PC-9 (cell line): ENCODE measurements at regions of chr15 and their contacts with region 1.

Region 1: DNA sequence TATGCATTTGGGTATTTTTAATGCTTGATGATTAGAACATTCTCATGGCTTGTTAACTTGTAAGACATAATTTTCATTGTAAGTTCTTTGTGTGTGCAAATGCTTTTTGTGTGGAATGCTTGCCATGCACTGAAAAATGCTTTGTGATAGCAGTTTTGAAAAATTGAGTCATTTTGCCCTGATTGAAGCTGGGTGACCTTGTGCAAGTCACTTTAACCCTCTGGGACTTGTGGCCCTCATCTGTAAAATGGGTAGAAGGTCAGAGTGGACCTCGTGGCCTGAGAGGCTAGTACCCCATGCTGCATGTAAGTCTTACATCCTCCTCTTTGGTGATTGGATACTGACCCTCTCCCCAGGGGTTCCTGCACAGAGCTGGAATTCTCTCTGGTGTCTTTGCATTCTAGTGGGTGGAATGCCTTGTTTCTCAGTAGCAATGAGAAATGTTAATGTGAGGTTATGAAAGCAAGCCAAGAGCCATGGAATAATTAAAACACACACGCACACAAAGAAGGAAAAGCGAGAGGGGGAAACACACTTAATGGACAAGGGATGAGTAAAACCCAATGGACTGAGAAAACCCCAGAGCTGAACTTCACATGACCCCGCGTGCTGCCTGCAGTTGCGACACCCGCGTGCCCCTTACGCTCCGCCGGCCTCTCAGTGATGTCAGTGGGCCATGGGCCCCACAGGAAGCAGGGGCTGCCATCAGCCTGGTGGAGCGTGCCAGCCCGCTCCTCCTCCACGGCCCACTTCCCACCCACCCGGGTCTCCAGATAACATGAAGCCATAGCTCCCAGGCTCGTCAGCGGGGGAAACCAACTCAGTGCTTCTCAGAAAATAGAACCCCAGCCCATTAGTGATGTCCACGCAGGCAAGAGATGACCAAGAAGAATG is 44.0 kb downstream of the SMAD3 start:
- DNase-seq: peak in 1 of 2 experiments; percentile 36
- H3K4me3 ChIP-seq: no peak overlapping the region
- H3K27ac ChIP-seq: peak overlapping the region; percentile 100
- H3K4me1 ChIP-seq: peaks cover 67% of the 10 kb centered on the region
- H3K27me3 ChIP-seq: no peaks in the 10 kb centered on the region
- CTCF ChIP-seq: no peak

Region 2: DNA sequence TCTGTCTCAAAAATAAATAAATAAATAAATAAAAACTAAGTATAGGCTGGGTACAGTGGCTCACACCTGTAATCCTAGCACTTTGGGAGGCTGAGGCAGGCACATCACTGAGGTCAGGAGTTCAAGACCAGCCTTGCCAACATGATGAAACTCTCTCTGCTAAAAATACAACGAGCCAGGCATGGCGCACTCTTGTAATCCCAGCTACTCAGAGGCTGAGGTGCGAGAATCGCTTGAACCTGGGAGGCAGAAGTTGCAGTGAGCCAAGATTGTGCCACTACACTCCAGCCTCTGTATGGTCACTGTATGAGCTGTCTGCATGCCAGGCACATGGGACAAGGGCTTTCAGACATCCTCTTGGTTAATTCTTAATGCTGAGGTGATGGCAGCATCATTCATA is 781.7 kb before region 1 on chr15:
- CTCF ChIA-PET with region 1: no interaction called
- POLR2A ChIA-PET with region 1: no interaction called
- intact Hi-C with region 1: no loop called
- DNase-seq: no peak
- H3K4me3 ChIP-seq: no peak overlapping the region
- H3K27ac ChIP-seq: no peak overlapping the region
- H3K4me1 ChIP-seq: no peaks in the 10 kb centered on the region
- H3K27me3 ChIP-seq: no peaks in the 10 kb centered on the region
- CTCF ChIP-seq: no peak

Region 3: GRCh38 chr15:66931768-66932633 is 177.4 kb before region 1 on chr15:
- CTCF ChIA-PET with region 1: interaction called, 7 read pairs
- POLR2A ChIA-PET with region 1: interaction called, 9 read pairs
- intact Hi-C with region 1: loop called (anchors 5 kb)
- DNase-seq: peak; percentile 83 to 91
- H3K4me3 ChIP-seq: peak overlapping the region; percentile 45
- H3K27ac ChIP-seq: peak overlapping the region; percentile 93
- H3K4me1 ChIP-seq: peaks cover 52% of the 10 kb centered on the region
- H3K27me3 ChIP-seq: no peaks in the 10 kb centered on the region
- CTCF ChIP-seq: no peak

Region 4: DNA sequence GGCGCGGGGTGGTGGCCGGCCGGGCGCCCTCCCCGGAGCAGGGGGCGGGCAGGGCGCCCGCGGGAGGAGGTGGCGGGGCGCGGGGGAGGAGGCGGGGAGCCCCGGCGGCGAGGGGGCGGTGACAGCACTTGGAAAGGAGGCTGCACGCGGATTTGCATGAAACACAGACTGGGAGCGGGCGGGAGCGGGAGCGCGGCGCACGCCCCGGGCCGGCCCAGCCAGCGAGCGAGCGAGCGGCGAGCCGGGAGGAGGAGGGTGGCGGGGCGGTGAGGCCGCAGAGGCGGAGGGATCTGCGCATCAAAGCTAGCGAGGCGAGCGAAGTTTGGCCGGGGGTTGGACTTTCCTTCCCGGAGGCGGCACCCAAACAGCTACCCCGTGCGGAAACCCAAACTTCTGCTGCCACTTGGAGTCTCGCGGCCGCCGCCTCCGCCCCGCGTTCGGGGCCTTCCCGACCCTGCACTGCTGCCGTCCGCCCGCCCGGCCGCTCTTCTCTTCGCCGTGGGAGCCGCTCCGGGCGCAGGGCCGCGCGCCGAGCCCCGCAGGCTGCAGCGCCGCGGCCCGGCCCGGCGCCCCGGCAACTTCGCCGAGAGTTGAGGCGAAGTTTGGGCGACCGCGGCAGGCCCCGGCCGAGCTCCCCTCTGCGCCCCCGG is 43.8 kb before region 1 on chr15 and contains the start of gene SMAD3:
- CTCF ChIA-PET with region 1: no interaction called
- POLR2A ChIA-PET with region 1: interaction called, 5 read pairs
- intact Hi-C with region 1: loop called (anchors 1 kb)
- DNase-seq: peak; percentile 73 to 92
- H3K4me3 ChIP-seq: peak within 1 kb of the TSS; percentile 88
- H3K27ac ChIP-seq: peak within 1 kb of the TSS; percentile 87
- H3K4me1 ChIP-seq: peaks cover 21% of the 10 kb centered on the region
- H3K27me3 ChIP-seq: no peaks in the 10 kb centered on the region
- CTCF ChIP-seq: no peak
- total RNA-seq, gene SMAD3: 99.5 and 109 TPM in 2 replicates

Region 5: DNA sequence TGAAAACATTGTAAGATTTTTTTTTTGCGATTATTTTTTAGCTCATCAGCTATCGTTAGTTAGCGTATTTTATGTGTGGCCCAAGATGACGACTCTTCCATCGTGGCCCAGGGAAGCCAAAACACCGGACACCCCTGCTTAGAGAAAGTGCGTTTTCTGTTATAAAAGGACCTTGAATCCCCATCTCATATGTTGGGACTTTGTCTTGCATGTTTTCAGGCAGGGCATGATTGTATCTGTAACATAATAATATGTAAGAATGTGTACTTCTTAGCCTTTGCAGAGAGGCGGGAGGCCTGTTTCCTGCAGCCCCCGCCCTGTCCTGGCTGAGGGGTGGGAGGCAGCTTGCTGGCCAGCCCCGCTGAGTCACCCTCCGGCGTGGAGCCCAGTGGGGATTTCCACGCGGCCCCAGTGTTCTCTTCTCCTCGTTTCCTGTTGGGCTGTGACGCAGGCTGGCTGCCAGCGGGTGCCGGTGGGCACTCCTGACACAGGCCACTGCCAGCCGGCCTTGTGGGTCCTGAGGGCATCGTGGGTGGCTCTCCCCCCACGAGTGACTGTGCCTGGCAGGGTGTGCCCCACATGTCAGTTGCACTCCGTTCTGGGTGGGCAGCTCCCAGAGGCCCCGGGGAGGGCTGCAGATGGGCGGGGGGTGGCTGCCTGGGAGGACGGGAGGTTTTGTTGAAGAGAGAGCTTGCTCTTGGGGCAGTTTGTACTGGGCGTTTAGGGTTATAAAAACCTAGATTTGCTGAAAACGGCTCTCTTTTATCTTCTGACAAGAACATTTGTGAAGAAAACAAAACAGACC is 11.7 kb after region 1 on chr15:
- CTCF ChIA-PET with region 1: interaction called, 3 read pairs
- POLR2A ChIA-PET with region 1: interaction called, 12 read pairs
- intact Hi-C with region 1: loop called (anchors 1 kb)
- DNase-seq: peak in 1 of 2 experiments; percentile 56
- H3K4me3 ChIP-seq: no peak overlapping the region
- H3K27ac ChIP-seq: peak overlapping the region; percentile 98; the same call in 1 of the 2 replicates
- H3K4me1 ChIP-seq: peaks cover 76% of the 10 kb centered on the region
- H3K27me3 ChIP-seq: no peaks in the 10 kb centered on the region
- CTCF ChIP-seq: no peak

Region 6: DNA sequence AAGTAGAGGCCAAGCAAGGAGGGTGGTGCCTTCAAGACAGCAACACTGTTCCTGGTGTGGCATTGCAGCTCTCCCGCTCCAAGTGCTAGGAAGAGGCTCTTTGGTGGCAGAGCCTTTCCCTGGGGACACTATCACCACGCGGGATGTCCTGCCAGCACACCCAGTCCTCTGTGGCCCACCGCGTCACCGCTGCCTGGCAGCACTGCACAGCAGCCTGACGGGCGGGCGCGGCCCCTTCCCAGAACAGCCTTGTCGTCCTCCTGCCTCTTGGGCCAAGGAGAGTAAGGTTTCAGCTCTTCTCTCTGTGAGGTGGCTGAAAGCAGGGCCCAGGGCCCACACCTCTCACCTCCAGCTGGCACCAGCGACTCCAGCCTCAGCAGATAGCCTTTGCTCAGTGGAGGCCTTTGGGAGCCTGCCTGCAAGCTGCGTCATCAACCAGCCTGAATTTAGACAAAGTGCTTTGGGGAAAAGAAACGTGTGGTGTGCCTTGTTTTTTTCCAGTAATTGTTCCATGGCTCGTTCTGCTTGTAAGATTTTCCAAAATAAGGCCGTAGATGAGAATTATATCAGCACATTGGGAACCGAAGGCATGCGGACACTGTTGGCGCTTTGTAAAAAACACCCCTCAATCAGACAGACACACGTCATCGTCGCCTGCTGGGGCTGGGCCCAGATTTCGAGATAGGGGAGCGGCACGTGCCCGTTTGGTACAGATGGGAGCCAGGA is 80.1 kb after region 1 on chr15:
- CTCF ChIA-PET with region 1: no interaction called
- POLR2A ChIA-PET with region 1: no interaction called
- intact Hi-C with region 1: loop called (anchors 5 kb)
- DNase-seq: no peak
- H3K4me3 ChIP-seq: no peak overlapping the region
- H3K27ac ChIP-seq: no peak overlapping the region
- H3K4me1 ChIP-seq: no peaks in the 10 kb centered on the region
- H3K27me3 ChIP-seq: no peaks in the 10 kb centered on the region
- CTCF ChIP-seq: no peak

Region 7: GRCh38 chr15:67290319-67290718 is 180.9 kb after region 1 on chr15:
- CTCF ChIA-PET with region 1: no interaction called
- POLR2A ChIA-PET with region 1: no interaction called
- intact Hi-C with region 1: no loop called
- DNase-seq: no peak
- H3K4me3 ChIP-seq: no peak overlapping the region
- H3K27ac ChIP-seq: no peak overlapping the region
- H3K4me1 ChIP-seq: no peaks in the 10 kb centered on the region
- H3K27me3 ChIP-seq: no peaks in the 10 kb centered on the region
- CTCF ChIP-seq: no peak

Region 8: GRCh38 chr15:67303490-67304363 is 194.3 kb after region 1 on chr15:
- CTCF ChIA-PET with region 1: no interaction called
- POLR2A ChIA-PET with region 1: no interaction called
- intact Hi-C with region 1: loop called (anchors 10 kb)
- DNase-seq: no peak
- H3K4me3 ChIP-seq: no peak overlapping the region
- H3K27ac ChIP-seq: no peak overlapping the region
- H3K4me1 ChIP-seq: no peaks in the 10 kb centered on the region
- H3K27me3 ChIP-seq: no peaks in the 10 kb centered on the region
- CTCF ChIP-seq: peak; percentile 66